PC-9 (cell line): ENCODE measurements at regions of chr20 and their contacts with region 1.

Region 1: GRCh38 chr20:35907017-35907701 is 47.1 kb downstream of the SCAND1 start:
- DNase-seq: no peak
- H3K4me3 ChIP-seq: no peak overlapping the region
- H3K27ac ChIP-seq: no peak overlapping the region
- H3K4me1 ChIP-seq: peaks cover 10% of the 10 kb centered on the region
- H3K27me3 ChIP-seq: no peaks in the 10 kb centered on the region
- CTCF ChIP-seq: no peak

Region 2: DNA sequence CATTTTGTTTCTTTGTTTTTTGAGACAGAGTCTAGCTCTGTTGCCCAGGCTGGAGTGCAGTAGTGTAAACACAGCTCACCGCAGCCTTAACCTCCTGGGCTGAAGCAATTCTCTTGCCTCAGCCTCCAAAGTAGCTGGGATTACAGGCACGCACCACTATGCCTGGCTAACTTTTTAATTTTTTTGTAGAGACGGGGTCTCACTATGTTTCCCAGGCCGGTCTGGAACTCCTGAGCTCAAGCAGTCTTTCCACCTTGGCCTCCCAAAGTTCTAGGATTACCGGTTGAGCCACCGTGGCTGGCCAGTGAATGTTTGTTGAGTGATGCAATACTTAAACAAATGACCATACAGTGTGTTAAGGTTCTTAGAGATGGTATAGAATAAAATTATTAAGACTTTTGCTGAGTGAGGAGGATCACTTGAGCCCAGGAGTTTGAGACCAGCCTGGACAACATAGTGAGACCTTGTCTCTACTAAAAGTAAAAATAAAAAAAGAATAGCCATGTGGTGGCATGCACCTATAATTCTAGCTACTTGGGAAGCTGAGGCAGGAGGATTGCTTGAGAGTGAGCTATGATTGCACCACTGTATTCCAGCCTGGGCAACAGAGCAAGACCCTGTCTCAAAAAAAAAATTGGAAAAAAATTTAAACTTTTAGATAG is 438.4 kb before region 1 on chr20:
- CTCF ChIA-PET with region 1: no interaction called
- POLR2A ChIA-PET with region 1: interaction called, 11 read pairs
- intact Hi-C with region 1: no loop called
- DNase-seq: peak in 1 of 2 experiments; percentile 78
- H3K4me3 ChIP-seq: peak overlapping the region; percentile 4; the same call in 1 of the 2 replicates
- H3K27ac ChIP-seq: peak overlapping the region; percentile 72
- H3K4me1 ChIP-seq: peaks cover 38% of the 10 kb centered on the region
- H3K27me3 ChIP-seq: no peaks in the 10 kb centered on the region
- CTCF ChIP-seq: no peak